ENCODE measurements at regions of chr2 and their contacts with region 1.

Region 1: GRCh38 chr2:175677880-175678279 is 324.2 kb downstream of the LNPK start:
- DNase-seq: no peak
- H3K4me3 Mint-ChIP-seq: no peak overlapping the region
- H3K27ac Mint-ChIP-seq: no peak overlapping the region
- H3K4me1 Mint-ChIP-seq: no peaks in the 10 kb centered on the region
- H3K27me3 Mint-ChIP-seq: peaks cover 2% of the 10 kb centered on the region

Region 2: GRCh38 chr2:175690113-175690837 is 12.4 kb after region 1 on chr2:
- CTCF ChIA-PET with region 1: interaction called, 11 read pairs
- POLR2A ChIA-PET with region 1: no interaction called
- intact Hi-C with region 1: no loop called
- DNase-seq: no peak
- H3K4me3 Mint-ChIP-seq: no peak overlapping the region
- H3K27ac Mint-ChIP-seq: no peak overlapping the region
- H3K4me1 Mint-ChIP-seq: no peaks in the 10 kb centered on the region
- H3K27me3 Mint-ChIP-seq: peaks cover 14% of the 10 kb centered on the region

Region 3: GRCh38 chr2:175976391-175977157 is 298.7 kb after region 1 on chr2:
- CTCF ChIA-PET with region 1: no interaction called
- POLR2A ChIA-PET with region 1: no interaction called
- intact Hi-C with region 1: no loop called
- DNase-seq: no peak
- H3K4me3 Mint-ChIP-seq: no peak overlapping the region
- H3K27ac Mint-ChIP-seq: no peak overlapping the region
- H3K4me1 Mint-ChIP-seq: no peaks in the 10 kb centered on the region
- H3K27me3 Mint-ChIP-seq: no peaks in the 10 kb centered on the region

Measured in activated CD4-positive, alpha-beta memory T cell treated with anti-CD3 and anti-CD28 coated beads for 36 hours (primary cell).